ENCODE measurements at regions of chr2 and their contacts with region 1.

Region 1: DNA sequence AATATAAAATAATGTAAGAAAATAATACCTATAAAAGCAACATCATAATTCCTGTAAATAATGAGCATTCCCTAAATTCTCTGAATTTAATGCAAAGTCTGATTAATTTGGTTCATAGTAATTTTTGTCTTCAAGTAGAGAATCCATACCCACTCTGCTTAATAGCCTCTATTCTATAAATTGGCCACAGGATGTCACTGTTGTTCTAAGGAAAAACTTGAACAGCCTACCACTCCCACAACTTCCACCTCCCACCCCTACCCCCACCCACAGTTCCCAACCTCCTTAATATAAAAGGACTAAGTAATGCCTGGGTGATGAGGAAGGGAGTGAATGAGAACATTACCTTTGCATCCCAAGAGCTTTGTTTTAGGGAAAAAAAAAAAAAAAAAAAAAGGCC is 27.2 kb upstream of the BBS5 start:
- DNase-seq: no peak
- H3K4me3 ChIP-seq: no peak overlapping the region
- H3K27ac ChIP-seq: no peak overlapping the region
- H3K4me1 ChIP-seq: no peaks in the 10 kb centered on the region
- H3K27me3 ChIP-seq: no peaks in the 10 kb centered on the region
- CTCF ChIP-seq: peak; percentile 63

Region 2: DNA sequence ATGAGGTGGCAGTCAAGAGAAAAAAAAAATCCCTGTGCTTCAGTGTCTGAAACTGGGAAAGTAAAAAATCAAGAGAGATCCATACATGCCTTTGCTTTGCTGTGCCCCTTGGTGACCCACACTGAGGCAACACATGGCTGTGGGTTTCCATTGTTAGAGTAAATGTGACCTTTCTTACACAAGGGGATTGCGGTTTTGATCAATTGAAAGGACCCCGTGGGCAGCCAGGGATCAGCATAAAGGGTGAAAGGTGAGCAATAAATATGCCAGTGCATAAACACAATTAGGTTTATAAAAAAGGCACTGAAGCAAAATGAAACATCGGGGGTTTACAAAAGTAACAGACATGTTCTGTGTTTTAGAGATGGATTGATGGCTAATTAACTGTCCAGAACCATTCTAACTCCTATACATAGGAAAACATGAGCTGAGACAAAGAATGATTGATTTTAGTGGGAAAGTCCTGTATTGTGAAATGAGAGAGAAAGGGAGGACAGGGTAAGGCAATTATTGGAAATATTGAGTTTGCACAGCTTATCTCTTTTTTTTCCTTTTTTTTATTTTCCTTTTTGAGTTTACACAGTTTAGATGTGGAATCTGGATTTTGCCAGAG is 13.5 kb before region 1 on chr2:
- CTCF ChIA-PET with region 1: no interaction called
- POLR2A ChIA-PET with region 1: no interaction called
- intact Hi-C with region 1: no loop called
- DNase-seq: no peak
- H3K4me3 ChIP-seq: no peak overlapping the region
- H3K27ac ChIP-seq: no peak overlapping the region
- H3K4me1 ChIP-seq: no peaks in the 10 kb centered on the region
- H3K27me3 ChIP-seq: no peaks in the 10 kb centered on the region
- CTCF ChIP-seq: no peak

Region 3: GRCh38 chr2:169462896-169463695 is 11.0 kb after region 1 on chr2:
- CTCF ChIA-PET with region 1: interaction called, 11 read pairs
- POLR2A ChIA-PET with region 1: no interaction called
- intact Hi-C with region 1: no loop called
- DNase-seq: no peak
- H3K4me3 ChIP-seq: no peak overlapping the region
- H3K27ac ChIP-seq: no peak overlapping the region
- H3K4me1 ChIP-seq: no peaks in the 10 kb centered on the region
- H3K27me3 ChIP-seq: no peaks in the 10 kb centered on the region
- CTCF ChIP-seq: no peak

Region 4: DNA sequence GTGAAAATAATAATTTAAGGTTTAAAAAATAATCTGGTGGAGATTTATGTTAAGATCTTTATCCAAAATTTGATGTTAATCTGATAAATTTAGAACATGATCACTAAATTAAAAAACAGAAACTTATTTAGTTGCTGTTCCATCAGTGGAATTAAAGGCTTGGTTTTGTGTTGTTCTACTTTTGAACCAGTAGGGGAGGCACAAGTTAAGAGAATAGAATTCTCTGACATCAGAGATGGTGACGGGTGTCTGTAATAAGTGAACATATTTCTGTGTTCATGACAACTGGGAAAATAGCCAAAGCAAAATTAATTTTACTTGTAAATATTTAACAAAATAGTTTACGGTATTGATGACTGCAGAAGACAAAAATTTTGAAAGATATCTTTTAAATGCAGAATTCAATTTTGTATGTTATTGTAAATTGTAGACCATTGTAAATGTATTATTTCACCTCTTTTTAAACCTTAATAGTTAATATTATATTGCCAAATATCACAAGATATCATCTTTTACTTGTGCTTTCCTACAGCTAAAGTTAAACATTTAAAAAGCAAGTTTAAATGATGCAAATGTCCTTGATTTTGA is 481.1 kb after region 1 on chr2:
- CTCF ChIA-PET with region 1: interaction called, 8 read pairs
- POLR2A ChIA-PET with region 1: no interaction called
- intact Hi-C with region 1: loop called (anchors 5 kb)
- DNase-seq: no peak
- H3K4me3 ChIP-seq: no peak overlapping the region
- H3K27ac ChIP-seq: no peak overlapping the region
- H3K4me1 ChIP-seq: no peaks in the 10 kb centered on the region
- H3K27me3 ChIP-seq: no peaks in the 10 kb centered on the region
- CTCF ChIP-seq: peak; percentile 72

Region 5: GRCh38 chr2:170298115-170298514 is 846.0 kb after region 1 on chr2:
- CTCF ChIA-PET with region 1: no interaction called
- POLR2A ChIA-PET with region 1: no interaction called
- intact Hi-C with region 1: no loop called
- DNase-seq: no peak
- H3K4me3 ChIP-seq: no peak overlapping the region
- H3K27ac ChIP-seq: no peak overlapping the region
- H3K4me1 ChIP-seq: no peaks in the 10 kb centered on the region
- H3K27me3 ChIP-seq: no peaks in the 10 kb centered on the region
- CTCF ChIP-seq: no peak

Region 6: GRCh38 chr2:171433763-171434670 is 1981.9 kb after region 1 on chr2 and contains the starts of genes DCAF17 and METTL8:
- CTCF ChIA-PET with region 1: no interaction called
- POLR2A ChIA-PET with region 1: interaction called, 14 read pairs
- intact Hi-C with region 1: no loop called
- DNase-seq: peak; percentile 95 to 98
- H3K4me3 ChIP-seq: peak within 1 kb of the TSS; percentile 64
- H3K27ac ChIP-seq: peak within 1 kb of the TSS; percentile 93
- H3K4me1 ChIP-seq: peaks cover 25% of the 10 kb centered on the region
- H3K27me3 ChIP-seq: no peaks in the 10 kb centered on the region
- CTCF ChIP-seq: peak; percentile 50
- total RNA-seq, gene DCAF17: 22.0 and 22.1 TPM in 2 replicates
- total RNA-seq, gene METTL8: 21.8 and 24.3 TPM in 2 replicates